ENCODE measurements at regions of chr9 and their contacts with region 1.

Region 1: DNA sequence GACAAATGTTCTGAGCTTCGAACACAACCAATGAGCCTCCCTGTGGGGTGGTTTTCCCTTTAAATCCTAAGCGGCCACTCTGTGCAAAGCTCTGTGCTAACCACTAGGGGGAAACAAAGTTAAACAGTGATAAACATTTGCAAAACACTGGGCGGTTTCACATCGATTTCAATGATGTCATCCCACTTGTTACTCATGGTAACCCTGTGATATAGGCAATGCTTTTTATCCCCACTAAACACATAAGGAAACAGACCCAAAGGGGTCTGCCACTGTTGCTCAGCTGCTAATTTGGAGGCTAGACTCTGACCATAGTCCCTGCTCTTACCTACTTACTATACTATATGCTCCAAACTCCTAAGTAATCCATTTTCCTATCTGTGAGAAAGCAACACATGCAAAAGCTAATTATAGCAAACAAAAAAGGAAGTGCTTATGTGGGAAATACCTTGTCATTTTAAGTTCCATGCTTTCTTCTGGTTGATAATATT is 57.3 kb downstream of the PTPN3 start:
- DNase-seq: peak; percentile 74
- H3K4me3 ChIP-seq: no peak overlapping the region; a peak in 1 of 4 replicates
- H3K27ac ChIP-seq: peak overlapping the region in 1 of 2 experiments; percentile 67; a peak in 2 of 4 replicates
- H3K4me1 ChIP-seq: peaks cover 0 to 2% of the 10 kb centered on the region in 2 experiments; a peak in 1 of 4 replicates
- H3K27me3 ChIP-seq: no peaks in the 10 kb centered on the region
- CTCF ChIP-seq: peak; percentile 90
- EP300 ChIP-seq: no peak
- RAD21 ChIP-seq: peak; percentile 85

Region 2: DNA sequence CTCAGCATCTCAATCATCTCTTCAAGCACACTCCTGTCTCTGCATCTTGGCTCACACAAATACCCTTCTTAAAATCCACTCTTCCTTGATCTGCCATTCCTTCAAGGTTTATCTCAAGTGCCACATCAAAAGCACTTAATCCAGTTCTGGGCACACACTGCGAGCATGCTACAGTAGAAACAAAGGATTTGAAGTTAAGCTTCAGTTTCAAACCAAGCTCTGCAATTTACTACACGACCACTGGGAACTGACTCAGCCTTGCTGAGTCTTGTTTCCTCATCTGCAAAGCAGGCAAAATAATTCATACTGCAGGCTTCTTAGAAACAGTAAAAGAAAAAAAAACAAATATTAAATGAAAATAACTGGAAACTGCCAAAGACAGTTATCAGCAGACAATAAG is 377.1 kb before region 1 on chr9:
- CTCF ChIA-PET with region 1: no interaction called
- POLR2A ChIA-PET with region 1: no interaction called
- DNase-seq: no peak
- H3K4me3 ChIP-seq: no peak overlapping the region
- H3K27ac ChIP-seq: peak overlapping the region in 1 of 2 experiments; percentile 56; a peak in 2 of 4 replicates
- H3K4me1 ChIP-seq: peaks cover 0 to 17% of the 10 kb centered on the region in 2 experiments; a peak in 2 of 4 replicates
- H3K27me3 ChIP-seq: no peaks in the 10 kb centered on the region
- CTCF ChIP-seq: peak; percentile 42
- EP300 ChIP-seq: no peak
- RAD21 ChIP-seq: no peak

Region 3: GRCh38 chr9:109422641-109423040 is 18.2 kb before region 1 on chr9:
- CTCF ChIA-PET with region 1: interaction called, 24 read pairs
- POLR2A ChIA-PET with region 1: no interaction called
- DNase-seq: no peak
- H3K4me3 ChIP-seq: no peak overlapping the region
- H3K27ac ChIP-seq: no peak overlapping the region
- H3K4me1 ChIP-seq: no peaks in the 10 kb centered on the region
- H3K27me3 ChIP-seq: no peaks in the 10 kb centered on the region
- CTCF ChIP-seq: no peak
- EP300 ChIP-seq: no peak
- RAD21 ChIP-seq: no peak

Region 4: GRCh38 chr9:109469646-109470358 is 29.0 kb after region 1 on chr9:
- CTCF ChIA-PET with region 1: interaction called, 177 read pairs
- POLR2A ChIA-PET with region 1: interaction called, 8 read pairs
- DNase-seq: peak; percentile 74
- H3K4me3 ChIP-seq: peak overlapping the region; percentile 27 to 40; a peak in 2 of 4 replicates
- H3K27ac ChIP-seq: peak overlapping the region in 1 of 2 experiments; percentile 60; a peak in 2 of 4 replicates
- H3K4me1 ChIP-seq: peaks cover 8 to 9% of the 10 kb centered on the region in 2 experiments; a peak in 1 of 4 replicates
- H3K27me3 ChIP-seq: no peaks in the 10 kb centered on the region
- CTCF ChIP-seq: peak; percentile 96
- EP300 ChIP-seq: no peak
- RAD21 ChIP-seq: peak; percentile 96

Region 5: DNA sequence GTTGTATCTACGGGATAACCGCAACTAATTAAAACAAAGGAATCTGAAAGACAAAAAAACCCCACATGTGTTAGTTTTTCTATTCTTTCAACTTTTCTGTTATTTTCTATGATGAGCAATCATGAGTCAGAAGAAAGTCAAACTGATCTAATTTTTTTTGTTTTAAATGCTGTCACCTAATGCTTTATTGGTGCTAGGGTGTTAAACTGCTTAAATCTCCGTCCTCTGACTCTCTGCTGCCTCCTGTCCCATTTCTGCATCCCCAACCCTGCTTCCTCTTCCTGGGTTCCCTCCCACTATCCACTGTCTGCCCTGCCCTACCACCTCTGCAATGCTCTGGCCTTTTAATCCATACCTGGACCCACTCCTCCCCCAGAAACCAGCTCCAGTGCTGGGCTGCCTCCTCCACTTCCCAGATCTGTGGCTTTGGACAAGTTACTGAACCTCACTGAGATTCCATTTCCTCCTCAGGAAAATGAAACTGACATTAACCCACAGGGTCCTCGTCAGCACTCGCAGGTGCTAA is 41.6 kb after region 1 on chr9:
- CTCF ChIA-PET with region 1: interaction called, 17 read pairs
- POLR2A ChIA-PET with region 1: no interaction called
- DNase-seq: no peak
- H3K4me3 ChIP-seq: no peak overlapping the region
- H3K27ac ChIP-seq: peak overlapping the region in 1 of 2 experiments; percentile 11; a peak in 1 of 4 replicates
- H3K4me1 ChIP-seq: peaks cover 5 to 9% of the 10 kb centered on the region in 2 experiments; a peak in 1 of 4 replicates
- H3K27me3 ChIP-seq: no peaks in the 10 kb centered on the region
- CTCF ChIP-seq: 0 out of 2 replicates have a peak, but pooled peaks have one; percentile 8
- EP300 ChIP-seq: no peak
- RAD21 ChIP-seq: no peak

Region 6: GRCh38 chr9:109507421-109507838 is 66.6 kb after region 1 on chr9:
- CTCF ChIA-PET with region 1: interaction called, 12 read pairs
- POLR2A ChIA-PET with region 1: no interaction called
- DNase-seq: no peak
- H3K4me3 ChIP-seq: no peak overlapping the region
- H3K27ac ChIP-seq: peak overlapping the region in 1 of 2 experiments; percentile 18; a peak in 1 of 4 replicates
- H3K4me1 ChIP-seq: no peaks in the 10 kb centered on the region
- H3K27me3 ChIP-seq: no peaks in the 10 kb centered on the region
- CTCF ChIP-seq: no peak
- EP300 ChIP-seq: peak in 1 of 2 experiments; percentile 15; a peak in 1 of 4 replicates
- RAD21 ChIP-seq: no peak

Measured in SK-N-SH (cell line).